ENCODE measurements at regions of chr15 and their contacts with region 1.

Region 1: GRCh38 chr15:85402195-85402881 is 21.9 kb downstream of the AKAP13 start:
- DNase-seq: peak in 1 of 14 experiments; percentile 25
- ATAC-seq: no peak
- H3K4me3 ChIP-seq: no peak overlapping the region
- H3K4me3 Mint-ChIP-seq: no peak overlapping the region
- H3K27ac ChIP-seq: no peak overlapping the region
- H3K27ac Mint-ChIP-seq: peak overlapping the region; percentile 31
- H3K4me1 ChIP-seq: peaks cover 30% of the 10 kb centered on the region
- H3K4me1 Mint-ChIP-seq: peaks cover 90% of the 10 kb centered on the region
- H3K27me3 ChIP-seq: no peaks in the 10 kb centered on the region
- H3K27me3 Mint-ChIP-seq: no peaks in the 10 kb centered on the region
- CTCF ChIP-seq: no peak

Region 2: GRCh38 chr15:85340321-85340665 is 62.0 kb before region 1 on chr15:
- CTCF ChIA-PET with region 1: no interaction called
- POLR2A ChIA-PET with region 1: no interaction called
- intact Hi-C with region 1: no loop called
- DNase-seq: no peak
- ATAC-seq: no peak
- H3K4me3 ChIP-seq: no peak overlapping the region
- H3K4me3 Mint-ChIP-seq: no peak overlapping the region
- H3K27ac ChIP-seq: no peak overlapping the region
- H3K27ac Mint-ChIP-seq: no peak overlapping the region
- H3K4me1 ChIP-seq: no peaks in the 10 kb centered on the region
- H3K4me1 Mint-ChIP-seq: no peaks in the 10 kb centered on the region
- H3K27me3 ChIP-seq: no peaks in the 10 kb centered on the region
- H3K27me3 Mint-ChIP-seq: no peaks in the 10 kb centered on the region
- CTCF ChIP-seq: no peak

Region 3: GRCh38 chr15:85412956-85413854 is 10.9 kb after region 1 on chr15:
- CTCF ChIA-PET with region 1: interaction called, 11 read pairs
- POLR2A ChIA-PET with region 1: interaction called, 18 read pairs
- intact Hi-C with region 1: no loop called
- DNase-seq: peak; percentile 45 to 89 (median 66)
- ATAC-seq: peak; percentile 96
- H3K4me3 ChIP-seq: no peak overlapping the region
- H3K4me3 Mint-ChIP-seq: peak overlapping the region; percentile 52
- H3K27ac ChIP-seq: peak overlapping the region; percentile 51 to 68
- H3K27ac Mint-ChIP-seq: peak overlapping the region; percentile 82
- H3K4me1 ChIP-seq: peaks cover 14% of the 10 kb centered on the region
- H3K4me1 Mint-ChIP-seq: peaks cover 64% of the 10 kb centered on the region
- H3K27me3 ChIP-seq: no peaks in the 10 kb centered on the region
- H3K27me3 Mint-ChIP-seq: no peaks in the 10 kb centered on the region
- CTCF ChIP-seq: no peak

Measured in CD4-positive, alpha-beta T cell (primary cell).